ENCODE measurements at regions of chr3 and their contacts with region 1.

Region 1: GRCh38 chr3:138434276-138434874 is at the start of gene ESYT3:
- DNase-seq: peak; percentile 86
- ATAC-seq: peak; percentile 89
- H3K4me3 Mint-ChIP-seq: peak within 1 kb of the TSS; percentile 71
- H3K27ac Mint-ChIP-seq: no peak within 1 kb of the TSS
- H3K4me1 Mint-ChIP-seq: peaks cover 9% of the 10 kb centered on the region
- H3K27me3 Mint-ChIP-seq: peaks cover 75% of the 10 kb centered on the region
- CTCF ChIP-seq: no peak
- total RNA-seq, gene ESYT3: 4.4 to 6.4 TPM (median 5.7 TPM) in 3 replicates

Region 2: DNA sequence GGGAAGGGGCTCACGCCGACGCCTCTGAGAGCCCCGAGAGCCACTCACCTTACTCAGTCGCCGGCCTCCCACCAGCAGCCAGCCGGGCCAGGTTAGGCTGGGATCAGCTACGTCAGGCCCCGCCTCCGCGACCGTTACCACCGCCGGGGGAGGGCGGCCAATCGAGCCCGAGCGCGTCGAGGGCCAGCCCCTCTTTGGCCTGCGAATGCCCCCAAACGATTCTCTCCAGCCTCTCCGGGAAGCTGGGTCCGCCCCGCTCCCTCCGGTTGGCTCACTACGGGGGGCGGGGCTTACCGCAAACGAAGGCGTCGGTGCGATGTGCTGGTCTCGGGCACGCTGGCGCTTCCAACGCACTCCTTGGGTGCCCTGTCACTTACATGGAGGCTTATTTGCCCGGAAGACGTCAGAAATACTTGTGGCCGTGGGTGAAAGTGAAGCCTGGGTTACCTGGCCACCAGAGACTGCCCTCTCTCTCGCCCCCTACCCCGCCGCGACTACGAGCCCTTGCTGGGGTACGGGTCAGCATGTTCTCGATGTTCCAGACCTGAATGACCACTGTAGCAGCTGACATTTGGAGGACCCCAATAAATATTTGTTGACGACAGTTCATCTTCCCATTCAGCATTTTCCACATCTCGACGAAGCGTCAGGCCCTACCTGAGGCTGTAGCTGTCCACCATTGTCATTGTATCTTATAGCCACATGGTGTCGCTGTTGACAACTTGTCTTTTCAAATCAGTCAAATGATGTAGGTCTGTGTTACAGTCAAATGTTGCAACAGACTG is 160.0 kb after region 1 on chr3 and contains the start of gene CEP70:
- CTCF ChIA-PET with region 1: interaction called, 13 read pairs
- POLR2A ChIA-PET with region 1: no interaction called
- DNase-seq: peak; percentile 95
- ATAC-seq: peak; percentile 93
- H3K4me3 Mint-ChIP-seq: peak within 1 kb of the TSS; percentile 96
- H3K27ac Mint-ChIP-seq: peak within 1 kb of the TSS; percentile 95
- H3K4me1 Mint-ChIP-seq: peaks cover 21% of the 10 kb centered on the region
- H3K27me3 Mint-ChIP-seq: no peaks in the 10 kb centered on the region
- CTCF ChIP-seq: peak; percentile 86
- total RNA-seq, gene CEP70: 27.2 to 34.8 TPM (median 33.5 TPM) in 3 replicates